Mammary epithelial cell (primary cell): ENCODE measurements at regions of chr9 and their contacts with region 1.

Region 1: DNA sequence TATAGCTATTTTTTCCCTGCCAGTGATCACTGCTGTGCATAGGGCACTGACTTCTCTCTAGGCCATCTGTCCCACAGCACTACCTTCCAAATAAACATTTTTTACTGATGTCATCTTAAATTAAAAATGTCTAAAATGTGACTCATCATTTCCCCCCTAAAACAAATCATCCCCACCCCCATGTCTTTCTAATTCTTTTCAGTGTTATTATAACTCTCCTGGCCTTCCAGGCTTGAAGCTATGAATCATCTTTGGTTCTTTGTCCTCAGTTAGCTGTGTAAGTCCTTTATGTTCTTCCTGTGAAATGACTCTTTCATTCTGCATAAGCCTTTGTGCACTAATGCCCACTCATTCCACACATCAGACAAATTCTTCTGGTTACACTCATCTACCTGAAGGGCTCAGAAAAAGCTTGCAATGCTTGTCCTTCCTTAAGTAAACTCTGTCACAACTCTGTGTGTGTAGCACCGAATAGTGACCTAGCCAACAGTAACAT is 78.1 kb downstream of the CFAP95 start:
- DNase-seq: peak; percentile 89
- H3K4me3 ChIP-seq: no peak overlapping the region
- H3K27ac ChIP-seq: peak overlapping the region; percentile 55
- H3K4me1 ChIP-seq: peaks cover 32% of the 10 kb centered on the region
- H3K27me3 ChIP-seq: no peaks in the 10 kb centered on the region
- CTCF ChIP-seq: no peak

Region 2: GRCh38 chr9:69835277-69836080 is 63.3 kb before region 1 on chr9:
- CTCF ChIA-PET with region 1: no interaction called
- dilution Hi-C with region 1: loop called (anchors 5 kb)
- in situ Hi-C with region 1: no loop called
- intact Hi-C with region 1: no loop called
- DNase-seq: no peak
- H3K4me3 ChIP-seq: no peak overlapping the region
- H3K27ac ChIP-seq: no peak overlapping the region
- H3K4me1 ChIP-seq: no peaks in the 10 kb centered on the region
- H3K27me3 ChIP-seq: no peaks in the 10 kb centered on the region
- CTCF ChIP-seq: no peak

Region 3: GRCh38 chr9:70218767-70219166 is 320.0 kb after region 1 on chr9:
- CTCF ChIA-PET with region 1: no interaction called
- dilution Hi-C with region 1: no loop called
- in situ Hi-C with region 1: no loop called
- intact Hi-C with region 1: no loop called
- DNase-seq: peak; percentile 6
- H3K4me3 ChIP-seq: no peak overlapping the region
- H3K27ac ChIP-seq: no peak overlapping the region
- H3K4me1 ChIP-seq: no peaks in the 10 kb centered on the region
- H3K27me3 ChIP-seq: no peaks in the 10 kb centered on the region
- CTCF ChIP-seq: no peak